ENCODE measurements at regions of chr12 and their contacts with region 1.

Region 1: DNA sequence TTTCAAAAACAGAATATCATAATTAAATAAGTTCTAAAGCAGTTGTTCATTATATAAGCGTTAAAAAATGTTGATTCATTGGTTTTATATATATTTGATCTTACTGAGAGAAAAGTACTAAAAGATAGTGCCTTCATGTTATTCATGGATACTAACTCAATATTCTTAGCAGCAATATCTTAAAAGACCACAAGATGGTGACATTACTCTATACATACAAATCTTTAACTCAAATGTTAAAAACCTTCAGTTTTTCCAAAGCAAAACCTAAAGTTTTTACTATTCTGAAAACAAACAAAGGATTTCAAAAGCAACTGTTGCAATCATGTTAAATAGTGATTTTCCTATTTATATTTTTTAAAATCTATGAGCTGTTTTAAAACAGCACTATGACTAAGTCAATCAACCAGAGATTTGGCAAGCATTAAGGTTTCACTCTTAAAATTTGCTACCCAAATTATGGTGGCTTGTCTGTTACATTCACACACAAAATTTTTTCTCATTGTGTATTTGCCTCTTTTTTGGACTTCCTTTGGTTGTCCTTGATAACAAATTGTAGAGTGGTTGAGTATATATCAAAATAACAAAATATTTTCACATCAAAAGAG is 50.1 kb upstream of the RERGL start:
- DNase-seq: no peak
- ATAC-seq: no peak
- H3K4me3 Mint-ChIP-seq: no peak overlapping the region
- H3K27ac Mint-ChIP-seq: no peak overlapping the region
- H3K4me1 Mint-ChIP-seq: peaks cover 6% of the 10 kb centered on the region
- H3K27me3 Mint-ChIP-seq: no peaks in the 10 kb centered on the region
- CTCF ChIP-seq: peak; percentile 50

Region 2: DNA sequence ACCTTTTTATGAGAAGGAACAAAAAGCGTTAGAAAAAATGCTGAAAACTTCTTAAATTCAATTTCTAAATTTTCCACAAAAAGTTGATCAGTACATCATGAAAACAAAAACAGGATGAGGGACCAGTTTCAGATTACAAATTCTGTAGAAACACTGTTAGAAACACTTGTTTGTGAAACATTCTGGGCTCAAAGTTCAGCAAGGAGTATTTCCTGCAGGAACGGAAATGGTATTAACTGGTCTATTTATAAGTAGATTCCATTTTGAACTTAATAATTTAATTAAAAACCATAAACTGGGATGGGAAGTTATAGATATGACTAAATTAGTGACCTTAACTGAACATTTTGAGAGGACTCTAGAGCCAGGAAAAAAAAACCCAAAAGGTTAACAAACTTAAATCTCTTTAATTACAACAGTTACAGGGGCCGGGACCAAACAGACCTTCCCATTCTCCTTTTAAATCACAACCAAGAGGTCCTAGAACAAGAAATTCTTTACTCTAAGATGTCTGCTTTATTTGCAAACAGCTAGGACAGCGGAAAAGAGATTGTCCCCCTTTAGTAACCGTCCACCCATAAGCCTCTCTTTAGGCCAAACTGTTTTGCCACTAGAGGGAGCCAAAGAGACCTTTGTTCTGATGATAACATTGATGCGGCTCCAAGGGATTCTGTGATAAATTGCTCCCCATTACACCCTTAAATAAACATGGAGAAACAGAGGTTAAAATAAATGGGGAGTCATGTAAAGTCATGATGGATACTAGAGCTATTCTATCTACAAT is 18.9 kb after region 1 on chr12:
- CTCF ChIA-PET with region 1: no interaction called
- POLR2A ChIA-PET with region 1: no interaction called
- DNase-seq: peak; percentile 33
- ATAC-seq: peak; percentile 87
- H3K4me3 Mint-ChIP-seq: no peak overlapping the region
- H3K27ac Mint-ChIP-seq: no peak overlapping the region
- H3K4me1 Mint-ChIP-seq: peaks cover 8% of the 10 kb centered on the region
- H3K27me3 Mint-ChIP-seq: 0 out of 2 replicates have a peak, but pooled peaks cover 6% of the 10 kb centered on the region
- CTCF ChIP-seq: peak; percentile 68

Region 3: DNA sequence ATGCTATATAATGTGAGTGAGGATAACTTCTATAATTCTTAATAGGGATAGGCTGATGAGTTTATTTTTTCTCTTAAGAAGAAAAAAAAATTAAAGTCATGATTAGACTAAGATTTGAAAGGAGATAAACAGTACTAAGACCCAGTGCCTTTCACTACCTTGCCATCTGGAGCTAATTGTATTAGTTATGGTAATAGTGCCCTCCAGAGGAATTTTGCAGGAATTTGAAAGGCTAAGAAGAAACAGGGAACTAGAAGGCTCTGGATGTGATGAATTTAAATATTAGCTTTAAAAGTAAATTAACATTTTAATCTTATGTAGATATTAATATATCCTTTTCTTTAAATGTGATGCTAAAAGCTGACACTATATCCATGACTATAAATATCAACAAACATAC is 84.7 kb after region 1 on chr12:
- CTCF ChIA-PET with region 1: interaction called, 16 read pairs
- POLR2A ChIA-PET with region 1: no interaction called
- DNase-seq: no peak
- ATAC-seq: peak; percentile 82
- H3K4me3 Mint-ChIP-seq: no peak overlapping the region
- H3K27ac Mint-ChIP-seq: no peak overlapping the region
- H3K4me1 Mint-ChIP-seq: peaks cover 14% of the 10 kb centered on the region
- H3K27me3 Mint-ChIP-seq: no peaks in the 10 kb centered on the region
- CTCF ChIP-seq: no peak; the same call in 1 of the 2 replicates